Breast epithelium (tissue), 4 donors: ENCODE measurements at regions of chr3 and their contacts with region 1.

Region 1: GRCh38 chr3:175777495-175777894 is 918.4 kb downstream of the NAALADL2 start:
- DNase-seq: no peak
- H3K4me3 ChIP-seq: no peak overlapping the region
- H3K27ac ChIP-seq: no peak overlapping the region
- H3K4me1 ChIP-seq: no peaks in the 10 kb centered on the region
- H3K27me3 ChIP-seq: no peaks in the 10 kb centered on the region
- CTCF ChIP-seq: no peak
- POLR2A ChIP-seq: no peak

Region 2: GRCh38 chr3:176078684-176079305 is 301.3 kb after region 1 on chr3:
- intact Hi-C with region 1: no loop called
- DNase-seq: no peak
- H3K4me3 ChIP-seq: no peak overlapping the region
- H3K27ac ChIP-seq: no peak overlapping the region
- H3K4me1 ChIP-seq: no peaks in the 10 kb centered on the region
- H3K27me3 ChIP-seq: no peaks in the 10 kb centered on the region
- CTCF ChIP-seq: no peak
- POLR2A ChIP-seq: no peak

Region 3: GRCh38 chr3:177150970-177151627 is 1373.6 kb after region 1 on chr3:
- intact Hi-C with region 1: loop called (anchors 10 kb)
- DNase-seq: no peak
- H3K4me3 ChIP-seq: no peak overlapping the region
- H3K27ac ChIP-seq: peak overlapping the region in 1 of 2 donors; percentile 33
- H3K4me1 ChIP-seq: peaks cover 0 to 16% of the 10 kb centered on the region in 2 donors
- H3K27me3 ChIP-seq: no peaks in the 10 kb centered on the region
- CTCF ChIP-seq: no peak
- POLR2A ChIP-seq: no peak